AG04450 (cell line): ENCODE measurements at regions of chr19 and their contacts with region 1.

Region 1: DNA sequence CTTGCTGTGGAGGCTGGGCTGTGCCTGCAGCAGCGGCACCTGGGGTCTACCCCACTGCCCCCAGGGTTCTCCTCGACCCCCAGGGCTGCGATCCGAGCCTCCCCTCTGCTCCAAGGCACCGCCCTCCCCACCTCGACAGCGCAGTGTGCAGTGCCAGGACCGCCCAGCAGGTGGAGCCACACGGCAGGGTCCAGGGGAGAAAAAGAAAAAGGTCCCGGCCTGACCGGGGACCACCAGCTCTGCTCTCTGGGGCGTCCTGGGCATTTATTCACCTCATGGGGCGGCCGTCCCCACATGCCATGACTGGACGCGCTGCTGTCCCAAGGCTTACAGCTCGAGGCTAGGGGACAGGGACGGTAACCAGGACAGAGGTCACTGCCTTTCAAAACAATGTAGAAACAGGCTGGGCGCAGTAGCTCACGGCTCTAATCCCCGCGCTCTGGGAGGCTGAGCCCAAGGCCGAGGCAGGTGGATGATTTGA is 10.6 kb downstream of the REXO1 start:
- DNase-seq: no peak
- H3K4me3 ChIP-seq: no peak overlapping the region
- H3K27ac ChIP-seq: no peak overlapping the region
- H3K27me3 ChIP-seq: no peaks in the 10 kb centered on the region
- CTCF ChIP-seq: peak; percentile 86

Region 2: GRCh38 chr19:1811472-1812218 is 26.0 kb before region 1 on chr19:
- CTCF ChIA-PET with region 1: interaction called, 11 read pairs
- POLR2A ChIA-PET with region 1: no interaction called
- DNase-seq: no peak
- H3K4me3 ChIP-seq: peak overlapping the region; percentile 73
- H3K27ac ChIP-seq: no peak overlapping the region
- H3K27me3 ChIP-seq: no peaks in the 10 kb centered on the region
- CTCF ChIP-seq: peak; percentile 34; the same call in 1 of the 2 replicates

Region 3: DNA sequence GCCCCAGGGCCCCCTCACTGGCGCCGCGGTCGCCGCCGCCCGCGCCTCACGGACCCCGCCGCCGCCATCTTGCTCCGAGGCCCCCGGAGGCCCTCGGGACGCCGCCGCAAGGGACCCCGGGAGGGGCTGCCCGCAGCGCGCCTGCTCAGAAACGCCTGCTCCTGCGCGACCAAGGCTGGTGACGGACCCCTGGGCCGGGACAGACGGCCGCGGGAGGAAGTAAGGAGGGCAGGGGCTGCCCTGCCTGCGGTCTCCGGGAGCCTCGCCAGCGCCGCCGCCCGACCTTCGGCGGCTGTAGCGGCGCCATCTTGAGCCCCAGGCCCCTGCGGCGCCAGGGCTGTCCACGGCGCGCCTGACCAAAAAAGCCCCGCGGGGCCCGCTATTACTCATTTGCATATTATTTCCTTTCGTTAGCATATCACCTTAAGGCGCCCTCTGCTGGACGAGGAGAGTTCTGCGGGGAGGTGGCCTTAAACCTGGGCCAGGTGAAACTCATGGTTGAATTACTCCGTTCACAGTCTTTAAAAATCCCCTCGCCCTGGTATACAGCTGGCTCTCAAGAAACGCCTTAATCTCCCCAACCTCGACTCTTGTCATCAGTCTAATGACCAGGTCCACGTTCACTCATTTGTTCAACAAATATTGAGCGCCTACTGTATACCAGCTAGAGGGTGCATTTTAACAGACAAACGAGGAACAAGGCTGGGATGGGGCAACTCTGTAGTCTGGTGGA is 10.9 kb after region 1 on chr19 and contains the start of gene REXO1:
- CTCF ChIA-PET with region 1: interaction called, 17 read pairs
- POLR2A ChIA-PET with region 1: no interaction called
- DNase-seq: peak; percentile 81
- H3K4me3 ChIP-seq: peak within 1 kb of the TSS; percentile 96
- H3K27ac ChIP-seq: peak within 1 kb of the TSS; percentile 91
- H3K27me3 ChIP-seq: no peaks in the 10 kb centered on the region
- CTCF ChIP-seq: peak; percentile 87
- polyA plus RNA-seq, gene REXO1: 5.4 and 8.4 TPM in 2 replicates

Region 4: GRCh38 chr19:1967087-1967608 is 129.5 kb after region 1 on chr19:
- CTCF ChIA-PET with region 1: no interaction called
- POLR2A ChIA-PET with region 1: no interaction called
- DNase-seq: no peak
- H3K4me3 ChIP-seq: no peak overlapping the region
- H3K27ac ChIP-seq: no peak overlapping the region
- H3K27me3 ChIP-seq: no peaks in the 10 kb centered on the region
- CTCF ChIP-seq: no peak